Activated T-helper 2 cell treated with anti-CD3 and anti-CD28 coated beads, Interferon-gamma antibody, Interleukin-2, Interleukin-4, amounts not matched to agents 10 μg/mL and 5 μg/mL and 100 μg/mL, durations not matched to agents 14 hours and 24 hours and 36 hours (primary cell): ENCODE measurements at regions of chr19 and their contacts with region 1.

Region 1: GRCh38 chr19:38634757-38635482 is 12.5 kb upstream of the ACTN4 start:
- DNase-seq: peak; percentile 68
- H3K4me3 Mint-ChIP-seq: no peak overlapping the region
- H3K27ac Mint-ChIP-seq: peak overlapping the region; percentile 82
- H3K4me1 Mint-ChIP-seq: peaks cover 14% of the 10 kb centered on the region
- H3K27me3 Mint-ChIP-seq: no peaks in the 10 kb centered on the region

Region 2: DNA sequence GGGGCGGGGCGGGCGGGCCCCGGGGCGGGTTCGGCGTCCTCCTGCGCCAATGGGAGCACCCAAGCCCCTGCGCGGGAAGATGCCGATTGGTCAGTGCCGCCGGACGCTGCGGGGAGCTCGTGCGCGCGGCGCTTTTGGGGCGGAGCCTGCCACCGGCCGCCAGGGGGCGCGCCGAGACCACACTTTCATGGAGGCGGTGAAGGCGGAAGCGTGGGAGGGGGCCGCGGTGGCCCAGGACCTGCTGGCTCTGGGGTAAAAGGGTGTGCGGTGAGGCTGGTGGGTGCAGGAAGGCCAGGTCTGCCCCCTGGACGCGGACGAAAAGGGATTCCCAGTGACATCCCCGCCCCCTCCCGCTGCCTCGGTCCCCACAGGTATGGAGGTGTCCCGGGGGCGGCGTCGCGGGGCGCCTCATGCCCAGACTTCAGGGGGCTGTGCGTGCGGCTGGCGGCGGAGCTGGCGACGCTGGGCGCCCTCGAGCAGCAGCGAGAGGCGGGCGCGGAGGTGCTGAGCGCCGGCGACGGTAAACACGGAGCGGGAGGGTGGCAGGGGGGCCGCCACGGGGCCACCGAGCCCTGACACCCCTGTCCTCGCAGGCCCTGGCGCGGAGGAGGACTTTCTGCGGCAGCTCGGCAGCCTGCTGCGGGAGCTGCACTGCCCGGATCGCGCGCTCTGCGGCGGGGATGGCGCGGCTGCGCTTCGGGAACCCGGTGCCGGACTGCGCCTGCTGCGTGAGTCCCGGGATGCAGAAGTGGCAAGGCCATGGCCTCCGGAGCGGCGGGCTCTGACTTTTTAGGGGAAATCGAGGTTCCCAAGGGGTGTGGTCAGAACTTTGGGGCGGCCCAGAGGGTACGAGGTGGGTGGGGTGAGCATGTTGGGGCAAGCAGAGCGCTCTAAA is 231.7 kb before region 1 on chr19 and contains the start of gene FAM98C:
- intact Hi-C with region 1: loop called (anchors 5 kb)
- DNase-seq: peak; percentile 97
- H3K4me3 Mint-ChIP-seq: peak within 1 kb of the TSS; percentile 87
- H3K27ac Mint-ChIP-seq: peak within 1 kb of the TSS; percentile 94
- H3K4me1 Mint-ChIP-seq: peaks cover 8% of the 10 kb centered on the region
- H3K27me3 Mint-ChIP-seq: peaks cover 3% of the 10 kb centered on the region
- total RNA-seq, gene FAM98C: 32.7 and 34.5 TPM in 2 replicates

Region 3: DNA sequence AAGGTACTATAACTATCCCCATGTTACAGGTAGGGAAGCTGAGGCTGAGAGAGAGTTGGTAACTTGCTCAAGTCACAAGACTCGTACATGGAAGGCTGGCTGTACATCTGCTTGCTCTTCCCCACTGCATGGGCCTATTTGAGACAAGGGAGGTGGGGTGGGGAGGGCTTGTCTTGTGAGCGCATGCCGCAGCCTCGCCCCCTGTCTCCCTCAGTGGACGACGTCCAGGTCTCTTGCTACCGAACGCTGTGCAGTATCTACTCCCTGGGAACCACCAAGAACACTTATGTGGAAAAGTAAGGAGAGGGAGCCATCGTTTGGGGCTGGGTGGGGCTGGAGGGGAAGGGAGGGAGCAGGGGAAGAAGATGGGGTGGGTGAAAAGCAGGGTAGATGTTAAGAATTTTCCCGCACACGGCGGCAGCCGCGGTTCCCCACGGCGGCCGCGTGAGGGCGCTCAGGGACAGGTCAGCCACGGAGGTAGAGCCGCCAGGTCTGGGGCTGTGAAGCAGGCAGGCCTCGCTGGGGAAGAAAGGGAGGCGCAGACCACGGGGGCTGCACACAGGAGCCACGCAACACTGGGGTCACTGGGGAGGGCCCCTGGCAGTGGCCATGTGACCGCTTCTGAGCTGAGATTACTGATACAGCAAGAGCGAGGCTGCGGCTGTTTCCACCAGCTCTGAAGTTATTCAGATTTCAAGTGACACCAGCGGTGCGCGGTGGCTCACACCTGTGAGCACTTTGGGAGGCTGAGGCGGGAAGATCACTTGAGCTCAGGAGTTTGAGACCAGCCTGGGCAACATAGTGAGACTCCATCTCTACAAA is 119.9 kb before region 1 on chr19:
- intact Hi-C with region 1: loop called (anchors 1 kb)
- DNase-seq: peak; percentile 71
- H3K4me3 Mint-ChIP-seq: no peak overlapping the region
- H3K27ac Mint-ChIP-seq: no peak overlapping the region
- H3K4me1 Mint-ChIP-seq: peaks cover 19% of the 10 kb centered on the region
- H3K27me3 Mint-ChIP-seq: peaks cover 3% of the 10 kb centered on the region

Region 4: GRCh38 chr19:38544034-38544958 is 90.6 kb before region 1 on chr19:
- intact Hi-C with region 1: loop called (anchors 1 kb)
- DNase-seq: peak; percentile 19
- H3K4me3 Mint-ChIP-seq: peak overlapping the region; percentile 32
- H3K27ac Mint-ChIP-seq: peak overlapping the region; percentile 69
- H3K4me1 Mint-ChIP-seq: peaks cover 25% of the 10 kb centered on the region
- H3K27me3 Mint-ChIP-seq: no peaks in the 10 kb centered on the region

Region 5: DNA sequence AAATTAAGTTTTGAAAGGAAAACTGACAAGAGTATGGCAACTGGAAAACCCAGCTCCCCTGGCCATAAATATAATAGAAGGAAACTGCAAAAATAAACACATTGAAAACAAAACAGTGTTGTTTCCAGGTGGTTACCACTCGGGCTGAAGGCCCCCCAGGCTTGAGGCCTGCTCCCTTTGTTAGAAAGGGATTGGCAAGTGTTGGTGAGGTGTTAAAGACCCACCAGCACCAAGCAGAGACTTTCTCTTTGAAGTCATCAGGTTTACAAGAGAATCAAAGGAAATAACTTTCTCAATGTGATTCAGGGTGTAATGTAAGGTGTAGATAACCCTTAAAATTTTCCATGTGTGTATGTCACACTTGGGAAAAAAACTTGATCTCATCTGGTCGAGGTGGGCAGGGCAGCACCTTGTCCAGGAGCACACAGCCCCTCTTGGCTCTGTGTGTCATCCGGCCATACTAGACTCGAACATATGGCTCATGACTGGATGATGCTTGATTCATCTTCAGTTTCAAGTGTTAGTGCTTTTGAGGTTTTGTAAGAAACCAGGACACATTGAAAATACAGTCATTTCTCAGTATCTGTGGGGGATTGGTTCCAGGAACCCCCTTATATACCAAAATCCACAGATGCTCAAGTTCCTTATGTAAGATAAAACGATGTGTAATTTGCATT is 20.4 kb after region 1 on chr19:
- intact Hi-C with region 1: loop called (anchors 1 kb)
- DNase-seq: no peak
- H3K4me3 Mint-ChIP-seq: peak overlapping the region; percentile 43
- H3K27ac Mint-ChIP-seq: peak overlapping the region; percentile 62
- H3K4me1 Mint-ChIP-seq: peaks cover 70% of the 10 kb centered on the region
- H3K27me3 Mint-ChIP-seq: no peaks in the 10 kb centered on the region

Region 6: DNA sequence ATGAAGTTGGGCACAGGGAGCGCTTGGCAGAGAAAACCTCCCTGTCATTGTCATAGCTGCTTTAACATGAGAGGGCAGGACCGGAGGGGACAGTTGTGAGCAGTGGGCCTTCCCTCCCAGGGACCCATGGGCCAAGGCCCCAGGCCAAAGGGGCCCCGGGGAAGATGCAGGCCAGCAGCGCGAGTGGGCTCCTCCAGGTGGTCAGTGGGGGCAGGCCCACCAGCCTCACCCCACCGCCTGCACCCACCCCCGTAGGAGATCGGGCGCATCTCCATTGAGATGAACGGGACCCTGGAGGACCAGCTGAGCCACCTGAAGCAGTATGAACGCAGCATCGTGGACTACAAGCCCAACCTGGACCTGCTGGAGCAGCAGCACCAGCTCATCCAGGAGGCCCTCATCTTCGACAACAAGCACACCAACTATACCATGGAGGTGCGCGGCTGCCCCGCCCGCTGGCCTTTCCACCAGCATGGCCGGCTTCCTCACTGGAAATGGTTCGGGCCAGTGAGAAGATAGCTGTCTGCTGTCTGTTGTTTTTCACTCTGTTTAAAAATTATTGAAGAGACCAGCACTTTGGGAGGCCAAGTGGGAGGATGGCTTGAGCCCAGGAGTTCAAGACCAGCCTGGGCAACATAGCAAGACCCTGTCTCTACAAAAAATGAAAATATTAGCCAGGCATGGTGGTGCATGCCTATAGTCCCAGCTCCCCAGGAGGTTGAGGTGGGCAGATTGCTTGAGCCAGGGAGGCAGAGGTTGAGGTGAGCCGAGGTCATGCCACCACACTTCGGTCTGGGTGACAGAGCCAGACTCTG is 90.8 kb after region 1 on chr19:
- intact Hi-C with region 1: no loop called
- DNase-seq: no peak
- H3K4me3 Mint-ChIP-seq: no peak overlapping the region
- H3K27ac Mint-ChIP-seq: no peak overlapping the region
- H3K4me1 Mint-ChIP-seq: peaks cover 4% of the 10 kb centered on the region
- H3K27me3 Mint-ChIP-seq: no peaks in the 10 kb centered on the region

Region 7: GRCh38 chr19:38736413-38737280 is 101.7 kb after region 1 on chr19:
- intact Hi-C with region 1: no loop called
- DNase-seq: no peak
- H3K4me3 Mint-ChIP-seq: peak overlapping the region; percentile 66
- H3K27ac Mint-ChIP-seq: peak overlapping the region; percentile 38
- H3K4me1 Mint-ChIP-seq: peaks cover 38% of the 10 kb centered on the region
- H3K27me3 Mint-ChIP-seq: peaks cover 6% of the 10 kb centered on the region

Region 8: GRCh38 chr19:38929929-38930775 is 295.2 kb after region 1 on chr19 and contains the start of gene SARS2:
- intact Hi-C with region 1: loop called (anchors 1 kb)
- DNase-seq: peak; percentile 92
- H3K4me3 Mint-ChIP-seq: peak within 1 kb of the TSS; percentile 94
- H3K27ac Mint-ChIP-seq: peak within 1 kb of the TSS; percentile 97
- H3K4me1 Mint-ChIP-seq: peaks cover 29% of the 10 kb centered on the region
- H3K27me3 Mint-ChIP-seq: no peaks in the 10 kb centered on the region
- total RNA-seq, gene SARS2: 41.1 and 45.2 TPM in 2 replicates